ENCODE measurements at regions of chr2 and their contacts with region 1.

Region 1: DNA sequence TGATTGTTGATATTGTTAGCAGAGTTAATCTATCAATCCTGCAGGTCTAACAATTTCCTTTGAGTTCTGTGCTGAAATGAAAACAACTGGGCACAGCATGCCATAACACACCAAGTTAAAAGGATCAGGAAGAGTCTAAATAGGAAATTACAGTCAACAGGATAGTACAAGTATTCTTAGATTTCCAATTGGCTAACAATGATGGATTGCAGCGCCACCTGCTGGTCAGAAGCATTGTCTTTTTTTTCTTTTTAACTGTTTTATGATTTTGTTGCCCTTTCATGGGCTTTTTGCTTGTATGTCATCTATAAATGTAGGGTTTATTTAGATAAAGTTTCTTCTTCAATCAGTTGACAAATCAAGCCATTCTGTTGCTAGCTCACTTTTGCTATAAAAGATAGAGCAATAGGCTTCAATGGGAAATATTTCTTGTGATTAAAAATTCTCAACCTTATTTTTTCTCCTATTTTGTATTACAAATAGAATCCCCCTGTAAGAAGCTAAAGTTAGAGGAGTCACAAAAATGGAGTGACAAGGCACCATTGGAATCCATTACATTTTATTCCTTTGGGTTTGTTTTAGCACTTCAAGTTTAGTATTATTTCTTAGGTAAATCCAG is 40.8 kb upstream of the RPRM start:
- DNase-seq: no peak
- ATAC-seq: no peak
- H3K4me3 ChIP-seq: no peak overlapping the region
- H3K27ac ChIP-seq: no peak overlapping the region
- H3K4me1 ChIP-seq: no peaks in the 10 kb centered on the region
- H3K27me3 ChIP-seq: peaks cover 0 to 5% (median 0%) of the 10 kb centered on the region in 9 donors
- CTCF ChIP-seq: peak; percentile 56 to 82 (median 72)
- POLR2A ChIP-seq: no peak

Region 2: DNA sequence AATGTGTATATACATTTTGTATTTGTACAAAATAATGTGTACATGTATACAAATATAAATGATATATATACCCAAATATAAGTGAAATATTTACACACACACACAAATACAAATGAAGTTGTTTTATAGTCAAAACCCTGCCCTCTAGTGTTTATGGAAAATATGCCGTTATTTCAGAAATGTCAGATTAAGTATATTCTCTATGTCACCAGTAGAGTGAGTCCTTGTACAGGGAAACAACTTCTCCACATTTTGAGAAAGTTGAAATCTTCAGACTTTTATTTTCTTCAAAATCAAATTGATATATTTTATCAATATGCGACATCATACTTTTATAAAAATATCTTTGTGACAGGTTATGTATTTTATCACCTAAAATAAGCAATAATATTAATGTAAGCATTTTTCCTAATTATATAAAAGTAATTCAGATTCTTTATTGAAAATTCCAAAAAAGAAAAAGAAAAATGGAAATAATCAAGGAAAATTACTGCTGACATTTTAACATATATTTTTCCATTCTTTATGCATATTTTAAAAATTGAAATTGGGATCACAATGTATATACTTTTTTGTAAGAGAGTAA is 778.5 kb before region 1 on chr2:
- intact Hi-C with region 1: loop called in 2 of 10 experiments (anchors 5 to 10 kb)
- DNase-seq: no peak
- ATAC-seq: no peak
- H3K4me3 ChIP-seq: no peak overlapping the region
- H3K27ac ChIP-seq: no peak overlapping the region
- H3K4me1 ChIP-seq: no peaks in the 10 kb centered on the region
- H3K27me3 ChIP-seq: no peaks in the 10 kb centered on the region
- CTCF ChIP-seq: peak; percentile 55 to 91 (median 66)
- POLR2A ChIP-seq: no peak

Region 3: DNA sequence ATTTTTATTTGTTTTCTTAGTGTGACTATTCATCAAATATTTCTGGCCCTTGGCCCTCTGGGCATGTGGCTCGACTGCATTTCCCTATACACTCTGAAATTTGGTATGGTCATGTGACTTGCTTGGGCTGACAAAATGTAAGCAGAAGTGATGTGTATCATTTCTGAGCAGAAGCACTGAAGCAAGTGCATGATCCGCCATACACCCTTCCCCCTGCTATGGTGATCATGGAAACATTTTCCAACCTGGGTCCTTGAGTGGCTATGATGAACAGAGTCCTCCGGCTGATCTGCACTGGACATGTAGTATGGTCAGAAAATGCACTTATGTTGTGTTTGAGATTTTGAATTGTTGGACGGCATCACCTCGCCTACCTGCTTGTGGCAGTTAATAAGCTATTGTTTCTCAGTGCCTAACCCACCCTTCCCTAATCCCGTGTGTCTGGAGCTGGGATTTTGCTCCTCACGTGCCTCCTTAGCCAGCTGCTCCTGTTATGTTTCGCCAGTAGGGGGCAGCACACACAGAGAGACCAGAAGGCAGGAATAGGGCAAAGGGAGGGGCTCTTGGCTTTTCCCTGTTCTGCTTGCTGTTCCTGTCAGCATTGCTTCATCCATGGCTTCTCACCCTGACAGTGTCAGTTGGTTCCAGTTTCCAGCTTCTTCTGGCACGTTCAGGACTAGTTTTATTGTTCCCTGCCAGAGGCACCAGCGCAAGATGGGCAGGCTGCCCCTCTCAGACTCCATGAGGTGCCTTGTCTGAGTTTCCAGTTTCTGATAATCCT is 593.6 kb before region 1 on chr2:
- intact Hi-C with region 1: loop called in 1 of 10 experiments (anchors 2 kb)
- DNase-seq: peak in 2 of 5 donors; percentile 18 to 30
- ATAC-seq: peak in 1 of 4 donors; percentile 49
- H3K4me3 ChIP-seq: no peak overlapping the region
- H3K27ac ChIP-seq: no peak overlapping the region
- H3K4me1 ChIP-seq: no peaks in the 10 kb centered on the region
- H3K27me3 ChIP-seq: peaks cover 0 to 10% (median 0%) of the 10 kb centered on the region in 9 donors
- CTCF ChIP-seq: peak; percentile 19 to 52 (median 36)
- POLR2A ChIP-seq: no peak

Region 4: GRCh38 chr2:153509133-153509532 is 10.2 kb before region 1 on chr2:
- intact Hi-C with region 1: loop called in 1 of 10 experiments (anchors 2 kb)
- DNase-seq: no peak
- ATAC-seq: no peak
- H3K4me3 ChIP-seq: no peak overlapping the region
- H3K27ac ChIP-seq: no peak overlapping the region
- H3K4me1 ChIP-seq: no peaks in the 10 kb centered on the region
- H3K27me3 ChIP-seq: peaks cover 0 to 4% (median 0%) of the 10 kb centered on the region in 9 donors
- CTCF ChIP-seq: no peak
- POLR2A ChIP-seq: no peak

Region 5: GRCh38 chr2:153668923-153669322 is 149.6 kb after region 1 on chr2:
- intact Hi-C with region 1: no loop called
- DNase-seq: no peak
- ATAC-seq: no peak
- H3K4me3 ChIP-seq: no peak overlapping the region
- H3K27ac ChIP-seq: no peak overlapping the region
- H3K4me1 ChIP-seq: no peaks in the 10 kb centered on the region
- H3K27me3 ChIP-seq: no peaks in the 10 kb centered on the region
- CTCF ChIP-seq: no peak
- POLR2A ChIP-seq: no peak

Measured in heart left ventricle (tissue), 16 donors.